CD4-positive, alpha-beta memory T cell (primary cell): ENCODE measurements at regions of chr19 and their contacts with region 1.

Region 1: DNA sequence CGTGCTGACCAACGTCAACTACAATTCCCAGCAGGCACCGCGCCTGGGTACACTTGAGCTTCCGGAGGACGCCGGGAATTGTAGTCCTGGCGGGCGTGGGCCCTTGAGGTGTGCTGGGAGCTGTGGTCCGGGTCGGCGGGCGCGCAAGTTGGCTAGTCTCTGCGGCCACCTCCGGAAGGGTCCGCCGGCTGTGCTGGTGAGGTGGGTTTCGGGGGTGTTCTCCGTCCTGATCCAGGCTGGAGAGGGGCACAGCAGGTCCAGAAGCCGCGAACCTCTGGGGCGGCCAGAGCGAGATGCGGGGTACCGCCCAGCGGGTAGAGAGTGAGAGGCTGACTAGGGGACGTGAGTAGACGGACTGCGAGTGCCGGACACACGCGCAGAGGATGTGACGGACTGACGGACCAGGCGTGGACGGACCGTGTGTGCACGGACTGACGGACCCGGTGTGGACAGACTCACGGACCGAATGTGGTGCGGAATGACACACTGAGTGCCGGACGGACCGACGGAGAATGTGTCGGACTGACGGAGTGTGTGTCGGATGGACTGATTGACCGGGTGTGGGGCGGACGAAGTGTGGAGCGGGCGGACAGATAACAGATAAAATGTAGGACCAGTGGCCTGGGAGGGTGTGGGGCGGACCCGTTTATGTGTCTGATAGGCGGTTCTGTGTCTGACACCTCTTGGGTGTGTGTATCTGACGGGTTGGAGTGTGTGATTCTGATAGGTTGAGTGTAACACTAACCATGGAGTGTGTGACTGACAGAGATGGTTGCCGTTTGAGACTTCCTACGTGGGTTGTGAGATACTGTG is at the start of gene ZSCAN22:
- DNase-seq: peak; percentile 80 to 89 (median 83)
- H3K4me3 ChIP-seq: peak within 1 kb of the TSS; percentile 32 to 77
- H3K4me3 Mint-ChIP-seq: no peak within 1 kb of the TSS
- H3K27ac ChIP-seq: peak within 1 kb of the TSS; percentile 80
- H3K27ac Mint-ChIP-seq: no peak within 1 kb of the TSS
- H3K4me1 ChIP-seq: peaks cover 25% of the 10 kb centered on the region
- H3K4me1 Mint-ChIP-seq: peaks cover 0 to 2% (median under 1%) of the 10 kb centered on the region in 4 donors
- H3K27me3 ChIP-seq: no peaks in the 10 kb centered on the region
- H3K27me3 Mint-ChIP-seq: no peaks in the 10 kb centered on the region
- total RNA-seq, gene ZSCAN22: 5.0 to 5.3 TPM

Region 2: GRCh38 chr19:58128041-58128685 is 199.0 kb before region 1 on chr19:
- CTCF ChIA-PET with region 1: no interaction called
- POLR2A ChIA-PET with region 1: no interaction called
- intact Hi-C with region 1: no loop called
- DNase-seq: no peak
- H3K4me3 ChIP-seq: peak overlapping the region; percentile 1 to 42
- H3K4me3 Mint-ChIP-seq: no peak overlapping the region
- H3K27ac ChIP-seq: no peak overlapping the region
- H3K27ac Mint-ChIP-seq: no peak overlapping the region
- H3K4me1 ChIP-seq: no peaks in the 10 kb centered on the region
- H3K4me1 Mint-ChIP-seq: peaks cover 0 to 3% (median 1%) of the 10 kb centered on the region in 4 donors
- H3K27me3 ChIP-seq: no peaks in the 10 kb centered on the region
- H3K27me3 Mint-ChIP-seq: no peaks in the 10 kb centered on the region

Region 3: GRCh38 chr19:58228585-58229254 is 98.4 kb before region 1 on chr19 and contains the start of gene ZNF544:
- CTCF ChIA-PET with region 1: no interaction called
- POLR2A ChIA-PET with region 1: no interaction called
- intact Hi-C with region 1: loop called (anchors 2 kb)
- DNase-seq: peak; percentile 33 to 60 (median 41)
- H3K4me3 ChIP-seq: peak within 1 kb of the TSS; percentile 68 to 70
- H3K4me3 Mint-ChIP-seq: peak within 1 kb of the TSS; percentile 92 to 97 (median 94)
- H3K27ac ChIP-seq: peak within 1 kb of the TSS; percentile 50
- H3K27ac Mint-ChIP-seq: peak within 1 kb of the TSS; percentile 82 to 95 (median 88)
- H3K4me1 ChIP-seq: peaks cover 15% of the 10 kb centered on the region
- H3K4me1 Mint-ChIP-seq: peaks cover 15 to 31% (median 24%) of the 10 kb centered on the region in 4 donors
- H3K27me3 ChIP-seq: no peaks in the 10 kb centered on the region
- H3K27me3 Mint-ChIP-seq: no peaks in the 10 kb centered on the region
- total RNA-seq, gene ZNF544: 63.3 to 67.6 TPM

Region 4: GRCh38 chr19:58400916-58401839 is 74.1 kb after region 1 on chr19:
- CTCF ChIA-PET with region 1: no interaction called
- POLR2A ChIA-PET with region 1: no interaction called
- intact Hi-C with region 1: loop called (anchors 2 kb)
- DNase-seq: peak; percentile 98 to 100 (median 99)
- H3K4me3 ChIP-seq: peak overlapping the region; percentile 57 to 59
- H3K4me3 Mint-ChIP-seq: peak overlapping the region; percentile 87 to 97 (median 91)
- H3K27ac ChIP-seq: peak overlapping the region; percentile 74
- H3K27ac Mint-ChIP-seq: peak overlapping the region; percentile 89 to 99 (median 97)
- H3K4me1 ChIP-seq: peaks cover 20% of the 10 kb centered on the region
- H3K4me1 Mint-ChIP-seq: peaks cover 5 to 20% (median 10%) of the 10 kb centered on the region in 4 donors
- H3K27me3 ChIP-seq: peaks cover 8% of the 10 kb centered on the region
- H3K27me3 Mint-ChIP-seq: peaks cover 6 to 9% of the 10 kb centered on the region in 2 donors

Region 5: GRCh38 chr19:58408152-58409009 is 81.3 kb after region 1 on chr19 and contains the start of gene ZNF584:
- CTCF ChIA-PET with region 1: no interaction called
- POLR2A ChIA-PET with region 1: interaction called, 4 read pairs
- intact Hi-C with region 1: loop called (anchors 2 kb)
- DNase-seq: peak; percentile 93 to 94 (median 93)
- H3K4me3 ChIP-seq: peak within 1 kb of the TSS; percentile 71 to 94
- H3K4me3 Mint-ChIP-seq: peak within 1 kb of the TSS; percentile 92 to 100 (median 96)
- H3K27ac ChIP-seq: peak within 1 kb of the TSS; percentile 77
- H3K27ac Mint-ChIP-seq: peak within 1 kb of the TSS; percentile 91 to 98 (median 95)
- H3K4me1 ChIP-seq: peaks cover 25% of the 10 kb centered on the region
- H3K4me1 Mint-ChIP-seq: peaks cover 21 to 39% (median 33%) of the 10 kb centered on the region in 4 donors
- H3K27me3 ChIP-seq: no peaks in the 10 kb centered on the region
- H3K27me3 Mint-ChIP-seq: no peaks in the 10 kb centered on the region
- total RNA-seq, gene ZNF584: 10.3 to 10.7 TPM

Region 6: GRCh38 chr19:58466760-58467589 is 139.9 kb after region 1 on chr19 and contains the start of gene ZNF324:
- CTCF ChIA-PET with region 1: no interaction called
- POLR2A ChIA-PET with region 1: no interaction called
- intact Hi-C with region 1: loop called (anchors 1 kb)
- DNase-seq: peak; percentile 94 to 96 (median 95)
- H3K4me3 ChIP-seq: peak within 1 kb of the TSS; percentile 52 to 83
- H3K4me3 Mint-ChIP-seq: peak within 1 kb of the TSS; percentile 82 to 91 (median 87)
- H3K27ac ChIP-seq: peak within 1 kb of the TSS; percentile 92
- H3K27ac Mint-ChIP-seq: peak within 1 kb of the TSS; percentile 80 to 93 (median 91)
- H3K4me1 ChIP-seq: peaks cover 20% of the 10 kb centered on the region
- H3K4me1 Mint-ChIP-seq: peaks cover 14 to 32% (median 22%) of the 10 kb centered on the region in 4 donors
- H3K27me3 ChIP-seq: no peaks in the 10 kb centered on the region
- H3K27me3 Mint-ChIP-seq: peaks cover 0 to 1% of the 10 kb centered on the region in 2 donors
- total RNA-seq, gene ZNF324: 27.6 TPM